GM12878 (cell line): ENCODE measurements at regions of chr6 and their contacts with region 1.

Region 1: GRCh38 chr6:118283766-118284165 is 264.3 kb upstream of the PLN start:
- DNase-seq: no peak
- ATAC-seq: peak; percentile 63
- H3K4me3 ChIP-seq: no peak overlapping the region
- H3K27ac ChIP-seq: no peak overlapping the region
- H3K4me1 ChIP-seq: peaks cover 8% of the 10 kb centered on the region
- H3K27me3 ChIP-seq: peaks cover 0 to 7% of the 10 kb centered on the region in 2 experiments; a peak in 1 of 4 replicates
- CTCF ChIP-seq: peak; percentile 49 to 65 (median 55)
- EP300 ChIP-seq: no peak
- POLR2A ChIP-seq: no peak
- RAD21 ChIP-seq: peak; percentile 68

Region 2: GRCh38 chr6:117840541-117840983 is 443.2 kb before region 1 on chr6:
- CTCF ChIA-PET with region 1: no interaction called
- POLR2A ChIA-PET with region 1: no interaction called
- RAD21 ChIA-PET with region 1: no interaction called
- SMC1A ChIA-PET with region 1: no interaction called
- in situ Hi-C with region 1: no loop called
- intact Hi-C with region 1: loop called (anchors 5 kb)
- DNase-seq: no peak
- ATAC-seq: peak; percentile 70
- H3K4me3 ChIP-seq: no peak overlapping the region
- H3K27ac ChIP-seq: no peak overlapping the region
- H3K4me1 ChIP-seq: no peaks in the 10 kb centered on the region
- H3K27me3 ChIP-seq: no peaks in the 10 kb centered on the region
- CTCF ChIP-seq: peak; percentile 37 to 49 (median 41); a peak in 3 of 6 replicates
- EP300 ChIP-seq: no peak
- POLR2A ChIP-seq: no peak
- RAD21 ChIP-seq: peak; percentile 65

Region 3: DNA sequence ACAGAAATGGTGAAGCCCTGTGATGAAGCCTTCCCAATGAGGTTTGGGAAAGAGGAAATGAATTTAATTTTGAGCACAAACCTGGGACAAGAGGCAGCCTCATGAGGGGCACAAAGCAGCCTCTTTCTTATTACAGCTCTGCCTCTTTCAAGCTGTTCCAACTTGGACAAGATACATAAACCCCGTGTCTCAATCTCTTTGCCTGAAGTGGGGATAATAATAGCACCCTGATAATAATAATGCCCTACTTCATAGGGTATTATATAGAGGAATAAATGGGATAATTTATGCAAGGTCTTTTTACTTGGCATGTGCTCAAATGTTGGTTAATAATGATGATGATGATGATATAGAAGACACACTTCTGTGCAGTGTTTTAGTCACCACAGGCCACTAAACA is 173.2 kb after region 1 on chr6:
- CTCF ChIA-PET with region 1: no interaction called
- POLR2A ChIA-PET with region 1: no interaction called
- RAD21 ChIA-PET with region 1: no interaction called
- SMC1A ChIA-PET with region 1: no interaction called
- in situ Hi-C with region 1: no loop called
- intact Hi-C with region 1: no loop called
- DNase-seq: no peak
- ATAC-seq: no peak
- H3K4me3 ChIP-seq: no peak overlapping the region
- H3K27ac ChIP-seq: no peak overlapping the region
- H3K4me1 ChIP-seq: no peaks in the 10 kb centered on the region
- H3K27me3 ChIP-seq: no peaks in the 10 kb centered on the region
- CTCF ChIP-seq: no peak
- EP300 ChIP-seq: no peak
- POLR2A ChIP-seq: no peak
- RAD21 ChIP-seq: no peak

Region 4: GRCh38 chr6:118542184-118542952 is 258.6 kb after region 1 on chr6:
- CTCF ChIA-PET with region 1: interaction called, 4 read pairs
- POLR2A ChIA-PET with region 1: no interaction called
- RAD21 ChIA-PET with region 1: no interaction called
- SMC1A ChIA-PET with region 1: interaction called, 3 read pairs
- in situ Hi-C with region 1: loop called (anchors 10 kb)
- intact Hi-C with region 1: no loop called
- DNase-seq: no peak
- ATAC-seq: no peak
- H3K4me3 ChIP-seq: no peak overlapping the region
- H3K27ac ChIP-seq: no peak overlapping the region
- H3K4me1 ChIP-seq: no peaks in the 10 kb centered on the region
- H3K27me3 ChIP-seq: no peaks in the 10 kb centered on the region
- CTCF ChIP-seq: no peak
- EP300 ChIP-seq: no peak
- POLR2A ChIP-seq: no peak
- RAD21 ChIP-seq: no peak

Region 5: GRCh38 chr6:118618679-118619377 is 335.1 kb after region 1 on chr6:
- CTCF ChIA-PET with region 1: interaction called, 7 read pairs
- POLR2A ChIA-PET with region 1: no interaction called
- RAD21 ChIA-PET with region 1: no interaction called
- SMC1A ChIA-PET with region 1: no interaction called
- in situ Hi-C with region 1: loop called (anchors 10 kb)
- intact Hi-C with region 1: loop called (anchors 2 kb)
- DNase-seq: no peak
- ATAC-seq: peak; percentile 98
- H3K4me3 ChIP-seq: no peak overlapping the region
- H3K27ac ChIP-seq: no peak overlapping the region
- H3K4me1 ChIP-seq: no peaks in the 10 kb centered on the region
- H3K27me3 ChIP-seq: no peaks in the 10 kb centered on the region
- CTCF ChIP-seq: peak; percentile 92 to 96 (median 92)
- EP300 ChIP-seq: no peak
- POLR2A ChIP-seq: no peak
- RAD21 ChIP-seq: peak; percentile 88

Region 6: GRCh38 chr6:119110601-119111548 is 827.1 kb after region 1 on chr6:
- CTCF ChIA-PET with region 1: interaction called, 3 read pairs
- POLR2A ChIA-PET with region 1: no interaction called
- RAD21 ChIA-PET with region 1: no interaction called
- SMC1A ChIA-PET with region 1: no interaction called
- in situ Hi-C with region 1: no loop called
- intact Hi-C with region 1: loop called (anchors 5 kb)
- DNase-seq: peak; percentile 28
- ATAC-seq: peak; percentile 93
- H3K4me3 ChIP-seq: no peak overlapping the region
- H3K27ac ChIP-seq: no peak overlapping the region
- H3K4me1 ChIP-seq: no peaks in the 10 kb centered on the region
- H3K27me3 ChIP-seq: no peaks in the 10 kb centered on the region
- CTCF ChIP-seq: peak; percentile 42 to 72 (median 53); a peak in 5 of 6 replicates
- EP300 ChIP-seq: no peak
- POLR2A ChIP-seq: no peak
- RAD21 ChIP-seq: peak; percentile 81